Mammary epithelial cell (primary cell): ENCODE measurements at regions of chr12 and their contacts with region 1.

Region 1: DNA sequence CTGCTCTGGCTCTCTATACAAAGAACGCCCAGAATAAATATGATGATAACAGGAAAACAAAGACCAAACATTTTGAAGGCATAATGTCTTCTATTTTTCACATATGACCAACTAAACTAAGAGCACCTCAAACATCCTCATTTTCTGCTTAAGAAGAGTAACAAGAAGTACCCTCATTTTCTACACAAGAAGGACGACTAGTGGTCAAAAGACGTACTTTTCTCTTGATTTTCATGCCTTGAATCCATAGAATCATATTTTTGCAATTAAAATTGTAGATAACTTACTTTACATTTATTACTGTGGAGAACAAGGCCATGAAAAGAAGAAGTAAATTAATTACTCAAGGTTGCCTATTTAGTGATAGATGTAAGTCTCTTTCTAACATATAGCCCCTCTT is 358.6 kb downstream of the DUSP6 start:
- DNase-seq: peak; percentile 43
- H3K4me3 ChIP-seq: no peak overlapping the region
- H3K27ac ChIP-seq: no peak overlapping the region
- H3K4me1 ChIP-seq: no peaks in the 10 kb centered on the region
- H3K27me3 ChIP-seq: no peaks in the 10 kb centered on the region
- CTCF ChIP-seq: peak; percentile 58 to 65

Region 2: DNA sequence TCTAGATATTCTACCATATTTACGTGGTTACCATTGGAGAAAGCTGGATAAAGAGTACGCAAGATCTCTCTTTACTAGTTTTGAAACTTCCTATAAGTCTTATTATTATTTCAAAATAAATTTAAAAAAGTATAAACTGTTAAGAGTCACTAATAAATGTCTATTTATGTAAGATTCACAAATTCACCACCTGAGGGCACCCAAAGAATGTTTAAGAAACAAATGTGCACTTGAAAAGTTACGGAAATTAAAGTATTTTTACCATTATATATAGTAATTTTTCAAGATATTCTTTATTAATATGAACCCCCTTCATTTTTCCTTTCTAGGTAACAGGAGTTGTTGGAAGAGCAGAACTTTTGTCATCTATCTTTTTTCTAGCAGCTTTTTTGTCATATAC is 839.7 kb before region 1 on chr12:
- CTCF ChIA-PET with region 1: no interaction called
- dilution Hi-C with region 1: no loop called
- in situ Hi-C with region 1: no loop called
- intact Hi-C with region 1: loop called (anchors 2 kb)
- DNase-seq: no peak
- H3K4me3 ChIP-seq: no peak overlapping the region
- H3K27ac ChIP-seq: no peak overlapping the region
- H3K4me1 ChIP-seq: no peaks in the 10 kb centered on the region
- H3K27me3 ChIP-seq: no peaks in the 10 kb centered on the region
- CTCF ChIP-seq: peak; percentile 29 to 33

Region 3: GRCh38 chr12:88580051-88580871 is 413.4 kb before region 1 on chr12 and contains the start of gene KITLG:
- CTCF ChIA-PET with region 1: interaction called, 4 read pairs
- dilution Hi-C with region 1: no loop called
- in situ Hi-C with region 1: loop called in 1 of 2 experiments (anchors 25 kb)
- intact Hi-C with region 1: loop called (anchors 1 kb)
- DNase-seq: peak; percentile 90
- H3K4me3 ChIP-seq: peak within 1 kb of the TSS; percentile 96 to 99 (median 98)
- H3K27ac ChIP-seq: peak within 1 kb of the TSS; percentile 69
- H3K4me1 ChIP-seq: peaks cover 22% of the 10 kb centered on the region
- H3K27me3 ChIP-seq: no peaks in the 10 kb centered on the region
- CTCF ChIP-seq: peak; percentile 13 to 63
- total RNA-seq, gene KITLG: 26.2 to 45.3 TPM

Region 4: GRCh38 chr12:88638966-88639760 is 354.5 kb before region 1 on chr12:
- CTCF ChIA-PET with region 1: no interaction called
- dilution Hi-C with region 1: no loop called
- in situ Hi-C with region 1: loop called in 1 of 2 experiments (anchors 10 kb)
- intact Hi-C with region 1: no loop called
- DNase-seq: no peak
- H3K4me3 ChIP-seq: no peak overlapping the region
- H3K27ac ChIP-seq: no peak overlapping the region
- H3K4me1 ChIP-seq: no peaks in the 10 kb centered on the region
- H3K27me3 ChIP-seq: no peaks in the 10 kb centered on the region
- CTCF ChIP-seq: no peak

Region 5: DNA sequence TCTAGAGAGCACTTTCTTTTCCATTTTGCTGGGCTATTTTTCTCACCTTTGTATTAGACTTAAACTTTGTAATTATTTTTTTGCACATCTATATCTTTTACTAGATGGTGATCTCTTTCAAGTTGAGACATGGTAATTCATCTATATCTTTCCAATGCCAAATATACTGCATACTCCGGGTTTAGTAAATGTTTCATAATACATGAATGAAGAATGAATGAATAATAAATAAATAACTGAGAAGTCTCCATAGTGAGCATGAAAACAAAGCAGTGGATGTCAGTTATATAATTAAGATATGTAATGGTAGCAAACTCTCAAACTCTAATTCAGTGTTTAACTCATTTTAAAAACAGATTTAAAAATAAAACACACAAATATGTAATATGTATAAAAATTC is 70.8 kb before region 1 on chr12:
- CTCF ChIA-PET with region 1: no interaction called
- dilution Hi-C with region 1: no loop called
- in situ Hi-C with region 1: no loop called
- intact Hi-C with region 1: loop called (anchors 5 kb)
- DNase-seq: peak; percentile 61
- H3K4me3 ChIP-seq: no peak overlapping the region
- H3K27ac ChIP-seq: peak overlapping the region; percentile 67
- H3K4me1 ChIP-seq: peaks cover 45% of the 10 kb centered on the region
- H3K27me3 ChIP-seq: no peaks in the 10 kb centered on the region
- CTCF ChIP-seq: no peak

Region 6: GRCh38 chr12:89040146-89040964 is 46.7 kb after region 1 on chr12:
- CTCF ChIA-PET with region 1: no interaction called
- dilution Hi-C with region 1: no loop called
- in situ Hi-C with region 1: no loop called
- intact Hi-C with region 1: no loop called
- DNase-seq: peak; percentile 78
- H3K4me3 ChIP-seq: no peak overlapping the region
- H3K27ac ChIP-seq: no peak overlapping the region
- H3K4me1 ChIP-seq: no peaks in the 10 kb centered on the region
- H3K27me3 ChIP-seq: no peaks in the 10 kb centered on the region
- CTCF ChIP-seq: no peak